Activated T-helper 1 cell treated with anti-CD3 and anti-CD28 coated beads, Interleukin-12 subunit alpha, Interleukin-12 subunit beta, Interleukin-2, Interleukin-4 antibody, amounts not matched to agents 30 ng/mL and 10 ng/mL and 1 ng/mL, durations not matched to agents 14 hours and 24 hours and 36 hours (primary cell): ENCODE measurements at regions of chr12 and their contacts with region 1.

Region 1: GRCh38 chr12:89389755-89390661 is 37.7 kb upstream of the DUSP6 start:
- DNase-seq: no peak
- H3K4me3 Mint-ChIP-seq: no peak overlapping the region
- H3K27ac Mint-ChIP-seq: peak overlapping the region; percentile 78
- H3K4me1 Mint-ChIP-seq: peaks cover 33% of the 10 kb centered on the region
- H3K27me3 Mint-ChIP-seq: no peaks in the 10 kb centered on the region

Region 2: DNA sequence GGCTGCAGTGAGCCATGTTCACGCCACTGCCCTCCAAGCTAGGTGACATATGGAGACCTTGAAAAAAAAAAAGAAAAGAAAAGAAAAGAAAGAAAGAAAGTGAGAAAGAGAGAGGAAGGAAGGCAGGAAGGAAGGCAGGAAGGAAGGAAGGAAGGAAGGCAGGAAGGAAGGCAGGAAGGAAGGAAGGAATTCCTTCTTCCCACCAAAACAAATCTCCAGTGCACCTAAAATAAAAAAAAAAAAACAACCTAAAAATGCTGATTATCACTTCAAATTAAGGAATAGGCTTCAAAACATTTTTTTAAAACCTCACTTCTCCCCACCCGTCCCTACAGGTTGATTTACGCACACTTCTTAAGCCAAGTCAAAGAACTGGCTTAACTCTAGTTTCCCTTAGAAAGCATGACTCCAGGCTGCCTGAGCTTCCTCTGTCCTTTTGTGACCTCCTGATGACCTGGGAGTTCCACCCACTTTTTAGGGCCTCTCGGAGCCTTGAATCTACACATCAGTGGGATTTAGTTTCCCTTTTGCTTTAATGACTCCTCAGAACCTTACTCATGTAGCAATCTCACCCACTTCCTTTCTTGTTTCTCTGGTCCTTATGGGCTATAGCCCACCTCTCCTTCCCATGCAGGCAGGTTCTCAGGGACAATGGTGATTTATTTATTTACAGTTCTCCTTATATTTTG is 56.3 kb before region 1 on chr12:
- intact Hi-C with region 1: no loop called
- DNase-seq: no peak
- H3K4me3 Mint-ChIP-seq: peak overlapping the region; percentile 46
- H3K27ac Mint-ChIP-seq: peak overlapping the region; percentile 76
- H3K4me1 Mint-ChIP-seq: peaks cover 26% of the 10 kb centered on the region
- H3K27me3 Mint-ChIP-seq: no peaks in the 10 kb centered on the region

Region 3: DNA sequence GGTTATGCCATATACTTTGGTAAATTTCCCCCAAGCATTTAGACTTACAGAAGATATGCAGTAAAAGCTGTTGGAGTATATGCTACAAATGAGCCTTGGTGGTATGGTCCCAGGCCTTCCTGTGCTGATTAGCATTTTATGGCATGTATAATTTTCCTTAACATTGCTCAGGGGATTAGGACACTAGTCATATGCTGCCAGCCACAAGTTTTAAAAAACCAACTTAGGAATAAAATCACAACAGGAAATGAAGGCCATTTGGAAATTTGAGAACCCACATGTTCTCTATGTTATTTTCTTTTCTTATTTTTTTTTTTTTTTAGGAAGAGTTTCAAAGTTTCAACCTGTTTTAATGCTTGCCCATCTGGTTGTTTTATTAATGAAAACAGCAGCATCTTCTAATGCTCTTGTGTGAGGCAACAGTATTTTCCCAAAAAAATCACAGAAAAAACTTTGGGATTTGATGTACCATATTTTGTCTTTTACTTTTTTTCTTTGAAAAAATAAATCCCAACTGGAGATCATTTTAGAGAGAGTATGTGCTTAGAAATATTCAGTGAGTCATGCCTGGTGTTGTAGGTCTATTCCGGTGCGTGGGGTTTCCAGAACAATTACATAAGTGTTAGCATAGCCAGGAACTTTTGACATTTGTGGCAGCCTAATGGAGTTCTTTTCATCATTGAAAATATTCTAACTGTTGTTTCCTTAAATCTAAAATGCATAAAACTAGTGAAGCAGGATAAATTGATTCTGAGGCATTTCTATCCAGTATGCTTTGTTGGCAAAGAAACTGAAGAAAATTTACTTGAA is 16.0 kb before region 1 on chr12:
- intact Hi-C with region 1: loop called (anchors 1 kb)
- DNase-seq: no peak
- H3K4me3 Mint-ChIP-seq: no peak overlapping the region
- H3K27ac Mint-ChIP-seq: no peak overlapping the region
- H3K4me1 Mint-ChIP-seq: peaks cover 50% of the 10 kb centered on the region
- H3K27me3 Mint-ChIP-seq: no peaks in the 10 kb centered on the region

Region 4: GRCh38 chr12:89427508-89428156 is 37.6 kb after region 1 on chr12:
- intact Hi-C with region 1: loop called (anchors 5 kb)
- DNase-seq: peak; percentile 6
- H3K4me3 Mint-ChIP-seq: peak overlapping the region; percentile 32
- H3K27ac Mint-ChIP-seq: peak overlapping the region; percentile 72
- H3K4me1 Mint-ChIP-seq: peaks cover 53% of the 10 kb centered on the region
- H3K27me3 Mint-ChIP-seq: no peaks in the 10 kb centered on the region